Activated CD4-positive, alpha-beta T cell treated with anti-CD3 and anti-CD28 coated beads for 36 hours (primary cell): ENCODE measurements at regions of chr3 and their contacts with region 1.

Region 1: GRCh38 chr3:15241341-15241740 is 35.3 kb downstream of the CAPN7 start:
- DNase-seq: peak; percentile 70
- ATAC-seq: peak; percentile 57
- H3K4me3 Mint-ChIP-seq: no peak overlapping the region
- H3K27ac Mint-ChIP-seq: no peak overlapping the region
- H3K4me1 Mint-ChIP-seq: peaks cover 4% of the 10 kb centered on the region
- H3K27me3 Mint-ChIP-seq: no peaks in the 10 kb centered on the region

Region 2: DNA sequence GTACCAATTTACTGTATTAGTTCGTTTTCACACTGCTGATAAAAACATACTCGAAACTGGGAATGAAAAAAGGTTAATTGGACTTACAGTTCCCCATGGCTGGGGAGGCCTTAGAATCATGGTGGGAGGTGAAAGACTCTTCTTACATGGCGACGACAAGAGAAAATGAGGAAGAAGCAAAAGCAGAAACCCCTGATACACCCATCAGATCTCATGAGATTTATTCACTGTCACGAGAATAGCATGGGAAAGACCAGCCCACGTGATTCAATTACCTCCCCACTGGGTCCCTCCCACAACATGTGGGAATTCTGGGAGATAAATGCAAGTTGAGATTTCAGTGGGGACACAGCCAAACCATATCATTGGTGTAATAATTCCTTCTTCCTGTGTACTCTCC is 496.8 kb before region 1 on chr3:
- CTCF ChIA-PET with region 1: no interaction called
- POLR2A ChIA-PET with region 1: no interaction called
- intact Hi-C with region 1: no loop called
- DNase-seq: no peak
- ATAC-seq: no peak
- H3K4me3 Mint-ChIP-seq: no peak overlapping the region
- H3K27ac Mint-ChIP-seq: no peak overlapping the region
- H3K4me1 Mint-ChIP-seq: no peaks in the 10 kb centered on the region
- H3K27me3 Mint-ChIP-seq: peaks cover 29% of the 10 kb centered on the region

Region 3: GRCh38 chr3:14902719-14903118 is 338.6 kb before region 1 on chr3:
- CTCF ChIA-PET with region 1: no interaction called
- POLR2A ChIA-PET with region 1: no interaction called
- intact Hi-C with region 1: no loop called
- DNase-seq: no peak
- ATAC-seq: no peak
- H3K4me3 Mint-ChIP-seq: no peak overlapping the region
- H3K27ac Mint-ChIP-seq: no peak overlapping the region
- H3K4me1 Mint-ChIP-seq: no peaks in the 10 kb centered on the region
- H3K27me3 Mint-ChIP-seq: peaks cover 4% of the 10 kb centered on the region

Region 4: GRCh38 chr3:15572138-15572537 is 330.8 kb after region 1 on chr3:
- CTCF ChIA-PET with region 1: no interaction called
- POLR2A ChIA-PET with region 1: no interaction called
- intact Hi-C with region 1: loop called in 1 of 2 experiments (anchors 5 kb)
- DNase-seq: no peak
- ATAC-seq: no peak
- H3K4me3 Mint-ChIP-seq: no peak overlapping the region
- H3K27ac Mint-ChIP-seq: no peak overlapping the region
- H3K4me1 Mint-ChIP-seq: peaks cover 3% of the 10 kb centered on the region
- H3K27me3 Mint-ChIP-seq: no peaks in the 10 kb centered on the region